ENCODE measurements at regions of chr20 and their contacts with region 1.

Region 1: GRCh38 chr20:45771182-45771759 is 20.4 kb downstream of the WFDC3 start:
- DNase-seq: peak; percentile 86
- H3K4me3 Mint-ChIP-seq: no peak overlapping the region
- H3K27ac Mint-ChIP-seq: peak overlapping the region; percentile 23
- H3K4me1 Mint-ChIP-seq: peaks cover 21% of the 10 kb centered on the region
- H3K27me3 Mint-ChIP-seq: peaks cover 16% of the 10 kb centered on the region
- CTCF ChIP-seq: peak; percentile 91

Region 2: DNA sequence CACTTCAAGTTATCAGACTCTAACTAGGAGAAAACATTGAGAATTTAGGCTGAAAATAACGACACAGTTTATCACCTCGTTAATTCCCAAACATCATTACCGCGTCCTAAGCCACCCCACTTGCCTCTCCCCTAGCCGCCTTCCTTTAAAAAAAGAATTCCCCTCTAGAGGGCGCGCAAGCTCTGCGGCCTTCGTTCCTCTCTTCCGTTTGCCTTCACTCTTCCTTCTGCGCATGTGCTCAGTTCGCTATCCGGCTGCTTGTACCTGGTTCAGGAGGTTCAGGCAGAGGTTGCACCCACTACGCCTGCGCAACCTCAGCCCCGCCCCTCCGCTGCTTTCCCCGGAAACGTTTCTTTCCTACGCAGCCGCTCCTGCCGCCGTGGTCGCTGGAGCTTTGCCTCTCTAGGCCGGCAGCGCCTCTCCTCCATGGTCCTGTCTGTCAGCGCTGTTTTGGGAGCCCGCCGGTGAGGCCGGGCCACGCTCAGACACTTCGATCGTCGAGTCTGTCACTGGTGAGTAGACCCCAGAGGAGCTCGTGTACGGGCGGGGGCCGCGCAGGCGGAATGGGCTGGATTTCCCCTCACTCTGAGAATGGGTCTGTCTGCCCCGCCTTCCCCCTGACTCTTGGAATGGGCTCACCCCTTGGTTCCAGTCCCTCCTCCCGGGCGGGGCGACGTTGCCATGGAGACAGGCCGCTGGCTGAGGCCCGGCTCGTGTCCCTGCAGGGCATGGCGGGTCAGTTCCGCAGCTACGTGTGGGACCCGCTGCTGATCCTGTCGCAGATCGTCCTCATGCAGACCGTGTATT is 408.3 kb before region 1 on chr20 and contains the start of gene SYS1:
- CTCF ChIA-PET with region 1: interaction called, 15 read pairs
- intact Hi-C with region 1: no loop called
- DNase-seq: peak; percentile 100
- H3K4me3 Mint-ChIP-seq: peak within 1 kb of the TSS; percentile 91
- H3K27ac Mint-ChIP-seq: peak within 1 kb of the TSS; percentile 92
- H3K4me1 Mint-ChIP-seq: peaks cover 59% of the 10 kb centered on the region
- H3K27me3 Mint-ChIP-seq: no peaks in the 10 kb centered on the region
- CTCF ChIP-seq: peak; percentile 94
- total RNA-seq, gene SYS1: 42.1 and 45.5 TPM in 2 replicates

Region 3: DNA sequence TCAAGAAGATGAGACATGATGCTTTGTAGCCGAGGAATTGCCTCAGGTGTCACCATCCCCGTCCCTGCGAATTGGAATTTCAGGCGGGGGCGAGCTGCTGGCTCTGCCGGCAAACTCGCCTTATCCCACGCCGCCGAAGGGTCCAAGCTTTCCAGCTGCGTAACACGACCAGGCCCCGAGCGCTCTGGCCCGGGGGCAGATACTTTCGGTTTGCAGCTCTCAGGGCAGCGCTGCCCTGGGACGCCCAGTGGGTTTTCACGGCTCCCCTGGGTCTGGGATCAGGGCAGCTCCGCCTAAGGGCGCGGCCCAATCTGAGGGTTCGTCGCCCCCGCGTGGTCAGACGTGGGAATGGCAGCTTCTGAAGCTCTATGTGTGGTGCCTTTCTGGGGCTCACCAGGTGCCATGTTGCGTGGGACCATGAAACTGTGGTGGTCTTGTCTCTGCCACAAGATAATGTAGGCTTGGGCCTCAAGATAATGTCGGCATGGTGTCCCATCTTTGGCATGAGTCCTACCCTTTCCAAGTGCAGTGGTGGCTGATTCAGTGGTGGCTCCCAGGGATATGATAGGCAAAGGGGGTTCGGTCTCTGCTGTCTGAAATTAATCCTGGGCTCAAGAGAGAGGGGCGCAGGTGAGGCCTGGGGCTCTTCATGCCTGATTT is 334.4 kb before region 1 on chr20:
- CTCF ChIA-PET with region 1: interaction called, 19 read pairs
- intact Hi-C with region 1: no loop called
- DNase-seq: peak; percentile 97
- H3K4me3 Mint-ChIP-seq: peak overlapping the region; percentile 89
- H3K27ac Mint-ChIP-seq: peak overlapping the region; percentile 43
- H3K4me1 Mint-ChIP-seq: peaks cover 4% of the 10 kb centered on the region
- H3K27me3 Mint-ChIP-seq: no peaks in the 10 kb centered on the region
- CTCF ChIP-seq: peak; percentile 97

Region 4: GRCh38 chr20:45469336-45470261 is 301.7 kb before region 1 on chr20 and contains the start of gene WFDC2:
- CTCF ChIA-PET with region 1: interaction called, 3 read pairs
- intact Hi-C with region 1: loop called (anchors 5 kb)
- DNase-seq: peak; percentile 83
- H3K4me3 Mint-ChIP-seq: peak within 1 kb of the TSS; percentile 89
- H3K27ac Mint-ChIP-seq: peak within 1 kb of the TSS; percentile 46
- H3K4me1 Mint-ChIP-seq: peaks cover 31% of the 10 kb centered on the region
- H3K27me3 Mint-ChIP-seq: peaks cover 9% of the 10 kb centered on the region
- CTCF ChIP-seq: peak; percentile 40
- total RNA-seq, gene WFDC2: 295 TPM in 2 replicates

Region 5: DNA sequence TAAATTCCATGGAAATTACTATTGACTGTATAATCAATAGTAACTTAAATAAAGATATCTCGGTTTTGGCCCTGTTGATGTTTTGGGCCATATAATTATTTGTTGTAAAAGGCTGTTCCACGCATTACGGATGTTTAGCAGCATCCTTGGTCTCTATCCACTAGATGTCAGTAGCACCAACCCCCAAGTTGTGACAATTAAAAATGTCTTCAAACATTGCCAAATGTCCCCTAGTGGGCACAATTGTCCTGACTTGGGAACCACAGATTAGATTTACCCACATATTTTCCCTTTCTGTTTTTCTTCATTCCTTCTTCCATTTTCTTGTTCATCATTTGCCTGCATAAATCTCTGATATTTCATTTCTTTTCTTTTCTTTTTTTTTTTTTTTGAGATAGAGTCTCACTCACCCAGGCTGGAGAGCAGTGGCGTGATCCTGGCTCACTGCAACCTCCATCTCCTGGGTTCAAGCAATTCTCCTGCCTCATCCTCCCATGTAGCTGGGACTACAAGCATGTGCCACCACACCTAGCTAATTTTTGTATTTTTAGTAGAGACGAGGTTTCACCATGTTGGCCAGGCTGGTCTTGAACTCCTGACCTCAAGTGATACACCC is 178.6 kb before region 1 on chr20:
- CTCF ChIA-PET with region 1: interaction called, 7 read pairs
- intact Hi-C with region 1: loop called (anchors 1 kb)
- DNase-seq: peak; percentile 63
- H3K4me3 Mint-ChIP-seq: no peak overlapping the region
- H3K27ac Mint-ChIP-seq: no peak overlapping the region
- H3K4me1 Mint-ChIP-seq: peaks cover 8% of the 10 kb centered on the region
- H3K27me3 Mint-ChIP-seq: peaks cover 39% of the 10 kb centered on the region
- CTCF ChIP-seq: peak; percentile 91

Region 6: GRCh38 chr20:45727044-45727443 is 44.2 kb before region 1 on chr20:
- CTCF ChIA-PET with region 1: no interaction called
- intact Hi-C with region 1: no loop called
- DNase-seq: no peak
- H3K4me3 Mint-ChIP-seq: no peak overlapping the region
- H3K27ac Mint-ChIP-seq: no peak overlapping the region
- H3K4me1 Mint-ChIP-seq: peaks cover 7% of the 10 kb centered on the region
- H3K27me3 Mint-ChIP-seq: peaks cover 53% of the 10 kb centered on the region
- CTCF ChIP-seq: no peak

Region 7: GRCh38 chr20:46293084-46293483 is 521.8 kb after region 1 on chr20:
- CTCF ChIA-PET with region 1: no interaction called
- intact Hi-C with region 1: no loop called
- DNase-seq: no peak
- H3K4me3 Mint-ChIP-seq: no peak overlapping the region
- H3K27ac Mint-ChIP-seq: no peak overlapping the region
- H3K4me1 Mint-ChIP-seq: no peaks in the 10 kb centered on the region
- H3K27me3 Mint-ChIP-seq: no peaks in the 10 kb centered on the region
- CTCF ChIP-seq: no peak